Activated CD4-positive, alpha-beta T cell treated with anti-CD3 and anti-CD28 coated beads, Interleukin-2, amount 10 ng/mL, durations not matched to agents 24 days and 14 days (primary cell): ENCODE measurements at regions of chr6 and their contacts with region 1.

Region 1: GRCh38 chr6:127737009-127737486 is 160.1 kb downstream of the C6orf58 start:
- DNase-seq: peak; percentile 82
- H3K4me3 Mint-ChIP-seq: no peak overlapping the region
- H3K27ac Mint-ChIP-seq: peak overlapping the region; percentile 25
- H3K4me1 Mint-ChIP-seq: peaks cover 12% of the 10 kb centered on the region
- H3K27me3 Mint-ChIP-seq: no peaks in the 10 kb centered on the region

Region 2: GRCh38 chr6:127446356-127446755 is 290.7 kb before region 1 on chr6:
- intact Hi-C with region 1: no loop called
- DNase-seq: no peak
- H3K4me3 Mint-ChIP-seq: no peak overlapping the region
- H3K27ac Mint-ChIP-seq: no peak overlapping the region
- H3K4me1 Mint-ChIP-seq: peaks cover 2% of the 10 kb centered on the region
- H3K27me3 Mint-ChIP-seq: no peaks in the 10 kb centered on the region

Region 3: DNA sequence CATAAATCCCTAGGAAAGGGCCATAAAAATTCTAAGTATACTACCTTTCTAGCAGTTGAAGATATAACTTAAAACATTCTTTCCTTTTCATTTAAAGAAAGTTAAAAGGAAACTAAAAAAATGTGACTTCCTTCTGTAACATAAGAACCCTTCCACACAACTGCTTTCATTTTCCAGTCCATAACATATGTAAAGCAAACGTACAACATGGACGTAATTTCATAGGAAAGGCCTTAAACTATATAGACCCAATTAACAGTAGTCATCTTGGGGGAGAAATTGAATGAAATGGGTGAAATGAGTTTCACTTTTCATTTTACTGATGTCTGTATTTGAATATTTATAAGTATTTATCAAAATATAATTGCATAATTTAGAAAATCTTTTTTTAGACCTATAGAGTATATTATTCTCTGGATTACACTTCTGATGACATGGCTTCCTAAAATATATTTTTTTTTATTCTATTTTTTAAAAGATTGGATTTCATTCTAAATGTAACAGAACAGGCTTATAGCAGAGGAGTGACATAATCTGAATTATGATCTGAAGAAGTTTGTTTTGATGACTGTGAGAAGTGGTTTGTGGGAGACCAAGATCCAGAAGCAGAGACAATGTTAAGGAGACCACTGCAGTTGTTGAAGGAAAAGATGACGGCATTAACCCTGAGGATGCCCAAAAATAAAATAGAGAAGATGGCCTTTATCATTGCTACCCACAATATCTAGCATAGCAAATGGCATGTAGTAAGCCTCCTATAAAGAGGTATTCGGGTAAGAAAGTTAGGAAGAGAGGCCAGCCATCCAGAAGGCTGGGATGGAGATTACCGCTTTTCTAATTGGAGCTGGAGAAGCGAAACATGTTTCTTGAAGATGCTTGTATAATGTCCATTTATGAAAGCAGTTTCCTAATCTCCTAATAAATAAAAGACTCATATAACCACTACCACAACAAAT is 523.0 kb after region 1 on chr6:
- intact Hi-C with region 1: loop called (anchors 5 kb)
- DNase-seq: no peak
- H3K4me3 Mint-ChIP-seq: peak overlapping the region; percentile 48
- H3K27ac Mint-ChIP-seq: peak overlapping the region; percentile 69
- H3K4me1 Mint-ChIP-seq: peaks cover 22% of the 10 kb centered on the region
- H3K27me3 Mint-ChIP-seq: peaks cover 2% of the 10 kb centered on the region

Region 4: DNA sequence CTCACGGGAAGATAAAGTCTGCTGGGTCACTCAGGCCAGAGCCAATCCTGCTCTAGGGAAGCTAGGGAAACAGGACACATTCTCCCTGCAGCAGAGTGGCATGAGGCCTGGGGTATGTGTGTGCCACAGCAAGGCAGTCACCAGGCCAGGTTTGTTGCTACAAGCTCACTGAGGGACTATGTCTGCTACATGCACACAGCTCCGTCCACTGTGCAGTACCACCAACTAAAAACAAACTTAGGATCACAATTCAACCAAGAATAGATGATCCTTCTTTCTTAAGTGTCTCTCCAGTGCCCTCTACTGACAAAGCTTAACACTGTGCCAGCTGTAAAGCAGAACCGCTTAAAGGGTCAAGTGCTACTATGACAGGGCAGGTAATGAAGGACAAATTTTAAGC is 590.8 kb after region 1 on chr6:
- intact Hi-C with region 1: loop called (anchors 1 kb)
- DNase-seq: peak; percentile 81
- H3K4me3 Mint-ChIP-seq: no peak overlapping the region
- H3K27ac Mint-ChIP-seq: no peak overlapping the region
- H3K4me1 Mint-ChIP-seq: no peaks in the 10 kb centered on the region
- H3K27me3 Mint-ChIP-seq: peaks cover 1% of the 10 kb centered on the region

Region 5: GRCh38 chr6:128520436-128521281 is 783.6 kb after region 1 on chr6 and contains the start of gene PTPRK:
- intact Hi-C with region 1: loop called (anchors 1 kb)
- DNase-seq: peak; percentile 96
- H3K4me3 Mint-ChIP-seq: peak within 1 kb of the TSS; percentile 96
- H3K27ac Mint-ChIP-seq: peak within 1 kb of the TSS; percentile 84
- H3K4me1 Mint-ChIP-seq: peaks cover 19% of the 10 kb centered on the region
- H3K27me3 Mint-ChIP-seq: peaks cover 75% of the 10 kb centered on the region
- total RNA-seq, gene PTPRK: 3.6 and 5.4 TPM in 2 replicates

Region 6: DNA sequence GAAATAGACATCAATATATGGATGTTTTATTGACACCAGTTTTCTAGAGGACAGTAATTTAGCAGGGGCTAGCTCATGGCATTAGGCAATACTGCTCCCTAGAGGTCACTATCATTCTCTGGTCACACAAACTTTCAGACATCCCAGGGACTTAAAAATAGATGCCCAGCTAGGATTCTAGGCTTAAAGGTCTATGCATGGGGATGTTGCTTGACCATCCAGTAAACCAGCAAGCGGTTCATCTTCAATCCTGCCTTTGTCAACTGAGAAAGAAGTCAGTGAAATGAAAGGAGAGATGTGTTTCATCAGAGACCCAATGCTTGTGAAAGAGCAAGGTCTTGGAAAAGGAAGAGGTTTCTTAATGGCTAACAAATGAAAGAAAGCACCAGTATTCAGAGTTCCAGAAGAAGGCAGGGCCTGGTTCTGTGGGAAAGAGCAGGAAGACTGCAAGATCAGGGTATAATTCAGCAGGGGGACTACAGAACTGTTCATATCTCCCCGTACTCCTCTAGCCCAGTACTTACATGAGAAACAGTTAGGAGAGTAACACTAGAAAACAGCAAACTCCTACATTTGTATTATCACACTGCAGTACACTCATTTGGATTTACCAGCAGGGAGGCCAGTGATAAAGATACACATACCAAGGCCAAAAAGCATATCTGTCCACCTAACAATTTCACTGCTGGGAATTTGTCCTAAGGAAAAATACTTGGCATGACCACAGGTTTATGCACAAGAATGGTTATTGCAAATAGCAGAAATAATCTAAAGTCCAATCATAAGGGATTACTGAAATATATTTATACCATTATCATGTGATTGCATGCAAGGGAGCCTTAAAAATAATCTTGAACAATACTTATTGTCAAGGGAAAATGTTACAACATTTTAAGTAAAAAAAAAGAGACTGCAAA is 994.5 kb after region 1 on chr6:
- intact Hi-C with region 1: loop called (anchors 5 kb)
- DNase-seq: no peak
- H3K4me3 Mint-ChIP-seq: no peak overlapping the region
- H3K27ac Mint-ChIP-seq: no peak overlapping the region
- H3K4me1 Mint-ChIP-seq: peaks cover 2% of the 10 kb centered on the region
- H3K27me3 Mint-ChIP-seq: peaks cover 4% of the 10 kb centered on the region